K562 (cell line): ENCODE measurements at regions of chr19 and their contacts with region 1.

Region 1: DNA sequence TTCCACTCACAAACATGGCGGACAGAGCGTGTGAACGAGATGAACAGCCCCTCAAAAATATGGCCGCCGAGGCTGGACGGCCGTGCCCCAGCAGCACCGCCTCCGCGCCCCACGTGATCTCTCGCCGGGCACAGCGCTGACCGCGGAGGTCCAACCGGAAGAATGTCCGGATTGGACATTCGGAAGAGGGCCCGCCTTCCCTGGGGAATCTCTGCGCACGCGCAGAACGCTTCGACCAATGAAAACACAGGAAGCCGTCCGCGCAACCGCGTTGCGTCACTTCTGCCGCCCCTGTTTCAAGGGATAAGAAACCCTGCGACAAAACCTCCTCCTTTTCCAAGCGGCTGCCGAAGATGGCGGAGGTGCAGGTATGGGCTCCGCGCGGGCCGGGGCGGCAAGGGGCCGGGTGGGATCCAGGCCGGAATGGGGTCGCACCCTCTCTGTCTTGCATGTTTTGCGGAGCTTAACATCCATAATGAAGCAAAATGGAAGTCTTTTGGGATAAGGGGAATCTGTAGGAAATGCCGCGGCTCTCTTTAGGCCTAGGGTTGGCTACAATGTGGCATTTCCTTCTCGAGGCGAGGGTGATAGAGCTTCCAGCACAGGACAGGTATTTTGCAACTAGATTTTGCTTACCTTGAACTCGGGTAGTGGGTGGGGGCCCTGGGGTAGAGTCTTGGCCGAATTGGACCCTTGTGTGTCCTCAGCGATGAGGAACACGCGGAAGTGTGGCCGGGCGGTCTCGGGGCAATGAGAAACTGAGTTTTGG is at the start of gene RPL13A:
- DNase-seq: peak; percentile 91 to 100 (median 96)
- ATAC-seq: peak; percentile 92
- H3K4me3 ChIP-seq: peak within 1 kb of the TSS; percentile 100
- H3K27ac ChIP-seq: peak within 1 kb of the TSS; percentile 99
- H3K4me1 ChIP-seq: peaks cover 19 to 30% of the 10 kb centered on the region in 2 experiments; a peak in 3 of 5 replicates
- H3K27me3 ChIP-seq: no peaks in the 10 kb centered on the region
- CTCF ChIP-seq: no peak
- EP300 ChIP-seq: peak; percentile 35; the same call in 1 of the 2 replicates
- POLR2A ChIP-seq: peak; percentile 100
- RAD21 ChIP-seq: no peak
- polyA plus RNA-seq, gene RPL13A: 2,516 to 2,665 TPM

Region 2: DNA sequence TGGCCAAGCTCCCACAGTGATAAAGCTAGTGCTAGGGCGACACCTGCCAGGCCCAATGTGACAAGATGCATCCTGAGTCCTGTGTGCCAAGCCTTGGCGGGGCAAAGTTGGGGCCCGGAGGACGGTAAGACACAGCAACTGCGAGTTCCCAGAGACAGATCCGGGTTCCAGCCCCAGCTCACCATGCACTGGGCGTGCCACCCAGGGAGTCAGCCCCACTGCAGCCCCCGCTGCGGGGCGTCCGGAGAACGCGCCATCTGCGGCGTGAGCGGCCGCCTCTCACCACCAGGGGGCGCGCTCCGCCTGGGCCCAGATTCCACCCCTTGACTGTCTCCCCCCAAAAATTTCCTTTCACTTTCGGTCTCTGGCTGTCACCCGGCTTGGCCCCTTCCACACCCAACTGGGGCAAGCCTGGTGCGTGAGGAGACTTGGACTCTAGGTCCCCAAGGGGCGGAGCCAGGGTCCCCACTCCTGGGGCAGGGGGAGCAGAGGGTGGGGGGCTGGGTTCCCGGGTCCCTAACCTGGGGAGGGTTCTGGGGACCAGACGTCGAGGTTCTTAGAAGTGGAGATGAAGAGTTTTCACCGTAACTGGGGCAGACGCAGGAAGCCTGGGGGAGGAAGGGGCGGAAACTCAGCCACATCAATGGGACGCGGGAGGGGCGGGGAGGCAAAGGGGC is 13.5 kb before region 1 on chr19 and contains the start of gene FLT3LG:
- CTCF ChIA-PET with region 1: no interaction called
- POLR2A ChIA-PET with region 1: interaction called, 16 read pairs
- in situ Hi-C with region 1: no loop called
- intact Hi-C with region 1: no loop called
- DNase-seq: peak; percentile 87 to 91 (median 88)
- ATAC-seq: peak; percentile 76
- H3K4me3 ChIP-seq: peak within 1 kb of the TSS; percentile 56
- H3K27ac ChIP-seq: peak within 1 kb of the TSS; percentile 29; the same call in 2 of the 3 replicates
- H3K4me1 ChIP-seq: peaks cover 14 to 52% of the 10 kb centered on the region in 2 experiments
- H3K27me3 ChIP-seq: no peaks in the 10 kb centered on the region
- CTCF ChIP-seq: peak; percentile 94 to 97 (median 96)
- EP300 ChIP-seq: no peak
- POLR2A ChIP-seq: no peak; the same call in 1 of the 2 replicates
- RAD21 ChIP-seq: peak; percentile 62 to 71
- polyA plus RNA-seq, gene FLT3LG: 0.31 to 0.49 TPM

Region 3: GRCh38 chr19:49916842-49917733 is 429.6 kb after region 1 on chr19:
- CTCF ChIA-PET with region 1: no interaction called
- POLR2A ChIA-PET with region 1: no interaction called
- in situ Hi-C with region 1: no loop called
- intact Hi-C with region 1: no loop called
- DNase-seq: no peak
- ATAC-seq: no peak
- H3K4me3 ChIP-seq: no peak overlapping the region
- H3K27ac ChIP-seq: no peak overlapping the region
- H3K4me1 ChIP-seq: peaks cover 0 to 22% of the 10 kb centered on the region in 2 experiments; a peak in 2 of 5 replicates
- H3K27me3 ChIP-seq: no peaks in the 10 kb centered on the region
- CTCF ChIP-seq: peak in 2 of 3 experiments; percentile 18 to 26; a peak in 2 of 6 replicates
- EP300 ChIP-seq: no peak
- POLR2A ChIP-seq: no peak
- RAD21 ChIP-seq: no peak